ENCODE measurements at regions of chrX and their contacts with region 1.

Region 1: DNA sequence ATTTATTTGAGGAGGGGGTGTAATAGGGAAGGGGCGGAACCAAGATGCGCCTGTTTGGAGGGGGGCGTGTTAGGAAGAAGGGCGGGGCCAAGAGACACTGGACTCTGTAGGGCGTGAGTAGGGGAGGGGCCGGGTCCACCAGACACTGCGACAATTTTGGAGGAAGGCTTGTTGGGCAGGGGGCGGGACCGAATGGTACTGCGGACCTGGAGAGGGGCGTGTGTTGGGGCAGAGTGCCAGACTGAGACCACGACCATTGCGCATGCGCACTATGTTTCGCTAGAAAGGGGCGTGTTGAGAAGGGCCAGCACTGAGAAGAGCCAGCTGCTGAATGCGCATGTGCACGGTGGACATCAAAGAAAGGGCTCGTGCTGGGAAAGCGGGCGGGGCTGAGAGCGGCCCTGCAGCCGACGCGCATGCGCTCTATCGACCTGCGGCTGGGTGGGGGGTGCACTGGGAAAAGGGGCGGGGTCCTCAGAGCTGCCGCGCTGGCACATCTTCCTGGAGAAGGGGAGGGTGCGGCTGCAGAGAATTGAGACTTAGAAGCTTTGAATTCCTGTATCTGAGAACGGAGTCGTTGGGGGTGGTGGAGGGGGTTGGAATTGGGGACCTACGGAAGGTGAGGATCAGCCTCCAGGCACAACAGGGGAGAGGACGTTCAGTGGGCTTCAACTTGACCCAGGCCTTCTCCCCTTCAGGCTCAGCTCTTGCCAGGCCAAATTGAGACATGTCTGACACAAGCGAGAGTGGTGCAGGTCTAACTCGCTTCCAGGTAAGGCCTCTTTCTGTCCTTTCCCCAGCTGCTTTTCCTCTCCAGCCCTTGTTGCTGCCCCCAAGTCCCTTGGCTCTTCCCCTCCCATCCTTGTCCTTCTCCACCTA is 1.3 kb downstream of the MAGED2 start:
- DNase-seq: peak; percentile 70 to 94 (median 82)
- ATAC-seq: peak; percentile 74 to 78 (median 76)
- H3K4me3 ChIP-seq: peak overlapping the region; percentile 64 to 86
- H3K4me3 Mint-ChIP-seq: peak overlapping the region; percentile 92 to 95 (median 93)
- H3K27ac ChIP-seq: peak overlapping the region; percentile 92
- H3K27ac Mint-ChIP-seq: peak overlapping the region; percentile 92
- H3K4me1 ChIP-seq: peaks cover 0 to 19% of the 10 kb centered on the region in 2 experiments
- H3K4me1 Mint-ChIP-seq: peaks cover 21 to 29% (median 29%) of the 10 kb centered on the region in 3 donors
- H3K27me3 ChIP-seq: no peaks in the 10 kb centered on the region
- H3K27me3 Mint-ChIP-seq: peaks cover 0 to 14% of the 10 kb centered on the region in 2 donors

Region 2: GRCh38 chrX:54659547-54659946 is 149.3 kb before region 1 on chrX:
- CTCF ChIA-PET with region 1: no interaction called
- POLR2A ChIA-PET with region 1: no interaction called
- DNase-seq: no peak
- ATAC-seq: no peak
- H3K4me3 ChIP-seq: no peak overlapping the region
- H3K4me3 Mint-ChIP-seq: no peak overlapping the region
- H3K27ac ChIP-seq: no peak overlapping the region
- H3K27ac Mint-ChIP-seq: no peak overlapping the region
- H3K4me1 ChIP-seq: no peaks in the 10 kb centered on the region
- H3K4me1 Mint-ChIP-seq: no peaks in the 10 kb centered on the region
- H3K27me3 ChIP-seq: no peaks in the 10 kb centered on the region
- H3K27me3 Mint-ChIP-seq: peaks cover 0 to 6% of the 10 kb centered on the region in 2 donors

Region 3: DNA sequence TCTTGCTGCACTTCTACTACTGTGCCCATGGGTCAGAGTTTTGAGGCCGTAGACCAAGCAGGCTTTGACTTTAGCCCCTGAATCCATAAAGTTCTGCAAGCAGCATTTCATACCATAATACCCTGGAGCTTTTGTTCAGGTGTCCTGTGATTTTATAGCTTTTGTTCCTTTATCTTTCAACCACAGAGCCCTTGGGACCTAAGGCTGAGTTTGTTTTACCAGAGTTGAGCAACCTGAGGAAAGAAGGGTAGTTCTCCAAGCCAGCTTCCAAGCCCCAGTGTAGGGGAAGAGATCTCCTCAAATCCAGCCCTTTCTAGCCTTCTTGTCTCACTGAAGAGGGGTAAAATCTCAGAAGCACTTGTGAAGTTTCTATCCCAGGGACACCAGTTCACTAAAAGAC is 33.8 kb after region 1 on chrX:
- CTCF ChIA-PET with region 1: no interaction called
- POLR2A ChIA-PET with region 1: no interaction called
- DNase-seq: no peak
- ATAC-seq: no peak
- H3K4me3 ChIP-seq: no peak overlapping the region
- H3K4me3 Mint-ChIP-seq: no peak overlapping the region
- H3K27ac ChIP-seq: no peak overlapping the region
- H3K27ac Mint-ChIP-seq: no peak overlapping the region
- H3K4me1 ChIP-seq: no peaks in the 10 kb centered on the region
- H3K4me1 Mint-ChIP-seq: no peaks in the 10 kb centered on the region
- H3K27me3 ChIP-seq: peaks cover 0 to 2% of the 10 kb centered on the region in 2 experiments
- H3K27me3 Mint-ChIP-seq: peaks cover 8 to 37% of the 10 kb centered on the region in 2 donors

Region 4: DNA sequence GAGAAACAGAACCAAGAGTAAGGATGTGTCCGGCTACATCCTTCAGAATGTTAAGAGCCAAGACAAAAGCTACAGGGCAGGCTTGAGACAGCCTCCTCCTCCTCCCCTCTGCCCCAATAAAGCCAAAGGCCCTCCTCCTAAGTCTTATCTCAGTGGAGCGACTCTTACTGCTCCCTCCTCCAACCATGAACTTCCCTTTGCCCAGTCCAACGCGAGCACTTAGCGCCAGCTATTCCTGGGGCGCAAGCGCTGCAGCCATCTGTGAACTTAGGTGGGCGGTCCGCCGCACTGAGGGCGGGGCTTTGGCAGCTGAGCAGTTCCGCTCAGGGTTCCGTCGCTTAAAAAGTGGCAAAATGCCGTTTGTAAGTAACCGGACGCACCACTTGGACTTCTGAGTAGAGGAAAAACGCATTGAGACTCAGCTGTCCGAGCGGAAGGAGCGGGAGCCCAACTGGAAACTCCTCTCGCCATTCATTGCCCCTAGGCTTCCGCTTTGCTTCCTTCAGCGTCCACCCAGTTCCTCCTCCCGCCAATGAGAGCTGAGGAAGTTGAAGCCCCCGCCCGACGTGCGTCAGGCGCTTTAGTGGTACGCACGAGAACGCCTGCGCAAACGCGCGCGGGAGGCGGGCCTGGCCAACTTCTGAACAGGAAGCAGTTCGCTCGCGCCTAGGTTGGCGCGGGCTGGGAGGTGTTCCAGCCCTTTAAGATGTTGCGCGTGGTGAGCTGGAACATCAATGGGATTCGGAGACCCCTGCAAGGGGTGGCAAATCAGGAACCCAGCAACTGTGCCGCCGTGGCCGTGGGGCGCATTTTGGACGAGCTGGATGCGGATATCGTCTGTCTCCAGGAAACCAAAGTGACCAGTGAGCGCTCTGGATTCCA is 191.1 kb after region 1 on chrX and contains the start of gene APEX2:
- CTCF ChIA-PET with region 1: no interaction called
- POLR2A ChIA-PET with region 1: interaction called in 1 of 2 experiments, 10 read pairs
- DNase-seq: peak; percentile 66 to 93 (median 86)
- ATAC-seq: peak; percentile 95 to 96 (median 96)
- H3K4me3 ChIP-seq: peak within 1 kb of the TSS; percentile 86 to 90
- H3K4me3 Mint-ChIP-seq: peak within 1 kb of the TSS; percentile 92 to 95 (median 93)
- H3K27ac ChIP-seq: peak within 1 kb of the TSS; percentile 86
- H3K27ac Mint-ChIP-seq: peak within 1 kb of the TSS; percentile 94 to 95
- H3K4me1 ChIP-seq: peaks cover 2 to 28% of the 10 kb centered on the region in 2 experiments
- H3K4me1 Mint-ChIP-seq: peaks cover 17 to 36% (median 25%) of the 10 kb centered on the region in 3 donors
- H3K27me3 ChIP-seq: no peaks in the 10 kb centered on the region
- H3K27me3 Mint-ChIP-seq: peaks cover 0 to 16% of the 10 kb centered on the region in 2 donors
- total RNA-seq, gene APEX2: 7.5 to 17.2 (median 15.3) TPM

Region 5: GRCh38 chrX:56600141-56600540 is 1791.3 kb after region 1 on chrX:
- CTCF ChIA-PET with region 1: no interaction called
- POLR2A ChIA-PET with region 1: interaction called in 1 of 2 experiments, 11 read pairs
- DNase-seq: no peak
- ATAC-seq: no peak
- H3K4me3 ChIP-seq: no peak overlapping the region
- H3K4me3 Mint-ChIP-seq: no peak overlapping the region
- H3K27ac ChIP-seq: no peak overlapping the region
- H3K27ac Mint-ChIP-seq: no peak overlapping the region
- H3K4me1 ChIP-seq: no peaks in the 10 kb centered on the region
- H3K4me1 Mint-ChIP-seq: peaks cover 0 to 9% (median 4%) of the 10 kb centered on the region in 3 donors
- H3K27me3 ChIP-seq: no peaks in the 10 kb centered on the region
- H3K27me3 Mint-ChIP-seq: peaks cover 0 to 16% of the 10 kb centered on the region in 2 donors

Measured in T-cell (primary cell).